Activated naive CD4-positive, alpha-beta T cell treated with anti-CD3 and anti-CD28 coated beads for 36 hours (primary cell): ENCODE measurements at regions of chr18 and their contacts with region 1.

Region 1: DNA sequence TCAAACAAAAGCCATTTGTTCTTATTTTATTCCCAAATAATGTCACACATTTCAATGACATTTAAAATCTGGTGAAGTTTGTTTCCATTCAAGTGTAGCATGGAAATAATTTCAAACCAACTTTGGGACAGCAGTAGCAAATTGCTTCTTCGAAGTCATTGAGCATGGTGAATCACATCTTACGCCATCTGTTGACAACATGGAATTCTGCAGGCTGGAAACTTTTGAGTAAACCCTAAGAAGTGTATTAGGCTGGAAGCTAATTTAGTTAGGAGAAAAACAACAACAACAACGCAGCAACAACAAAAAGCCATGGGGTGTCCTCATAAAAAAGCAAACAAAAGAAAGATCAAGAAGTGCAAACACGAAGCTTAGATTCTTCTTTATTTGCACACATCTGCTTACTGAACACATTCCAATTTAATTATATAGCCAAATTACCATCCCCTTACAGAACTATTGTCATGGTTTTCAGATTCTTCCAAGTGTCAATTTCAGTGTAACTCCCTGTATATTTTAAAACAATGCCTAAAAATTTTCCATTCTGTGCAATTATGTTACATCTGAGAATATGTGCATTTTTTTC is 659.0 kb upstream of the CDH7 start:
- DNase-seq: peak; percentile 4
- H3K4me3 Mint-ChIP-seq: no peak overlapping the region
- H3K27ac Mint-ChIP-seq: no peak overlapping the region
- H3K4me1 Mint-ChIP-seq: no peaks in the 10 kb centered on the region
- H3K27me3 Mint-ChIP-seq: no peaks in the 10 kb centered on the region

Region 2: GRCh38 chr18:64017870-64018269 is 1074.0 kb before region 1 on chr18:
- CTCF ChIA-PET with region 1: no interaction called
- intact Hi-C with region 1: loop called (anchors 5 kb)
- DNase-seq: no peak
- H3K4me3 Mint-ChIP-seq: no peak overlapping the region
- H3K27ac Mint-ChIP-seq: no peak overlapping the region
- H3K4me1 Mint-ChIP-seq: peaks cover 5% of the 10 kb centered on the region
- H3K27me3 Mint-ChIP-seq: no peaks in the 10 kb centered on the region

Region 3: GRCh38 chr18:64791211-64791610 is 300.6 kb before region 1 on chr18:
- CTCF ChIA-PET with region 1: no interaction called
- intact Hi-C with region 1: no loop called
- DNase-seq: no peak
- H3K4me3 Mint-ChIP-seq: no peak overlapping the region
- H3K27ac Mint-ChIP-seq: no peak overlapping the region
- H3K4me1 Mint-ChIP-seq: no peaks in the 10 kb centered on the region
- H3K27me3 Mint-ChIP-seq: no peaks in the 10 kb centered on the region

Region 4: GRCh38 chr18:65073060-65073550 is 18.7 kb before region 1 on chr18:
- CTCF ChIA-PET with region 1: no interaction called
- intact Hi-C with region 1: no loop called
- DNase-seq: no peak
- H3K4me3 Mint-ChIP-seq: no peak overlapping the region
- H3K27ac Mint-ChIP-seq: no peak overlapping the region
- H3K4me1 Mint-ChIP-seq: no peaks in the 10 kb centered on the region
- H3K27me3 Mint-ChIP-seq: no peaks in the 10 kb centered on the region

Region 5: DNA sequence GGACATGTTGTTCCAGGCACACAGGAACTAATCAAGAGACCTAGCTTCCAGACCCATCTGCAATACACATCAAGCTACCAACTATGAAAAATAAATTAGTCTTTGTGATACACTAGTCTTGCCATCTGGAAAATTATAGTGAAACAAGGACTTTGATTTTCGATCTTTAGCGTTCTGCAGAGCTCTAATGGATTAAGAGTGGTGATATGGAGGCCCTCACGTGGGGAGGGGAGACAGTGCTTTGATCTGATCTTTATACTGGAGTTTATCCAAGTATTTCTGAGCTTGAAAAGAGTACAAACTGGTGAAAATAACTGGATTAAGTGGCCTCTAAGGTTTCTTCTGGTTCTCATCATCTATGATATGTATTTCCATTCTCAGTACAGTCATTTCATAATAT is 385.6 kb after region 1 on chr18:
- CTCF ChIA-PET with region 1: no interaction called
- intact Hi-C with region 1: no loop called
- DNase-seq: no peak
- H3K4me3 Mint-ChIP-seq: no peak overlapping the region
- H3K27ac Mint-ChIP-seq: no peak overlapping the region
- H3K4me1 Mint-ChIP-seq: no peaks in the 10 kb centered on the region
- H3K27me3 Mint-ChIP-seq: no peaks in the 10 kb centered on the region